ENCODE measurements at regions of chr2 and their contacts with region 1.

Region 1: GRCh38 chr2:241271641-241272297 is 43.7 kb downstream of the HDLBP start:
- DNase-seq: peak; percentile 92 to 94
- ATAC-seq: peak; percentile 91
- H3K4me3 ChIP-seq: peak overlapping the region; percentile 95 to 98
- H3K27ac ChIP-seq: peak overlapping the region; percentile 80 to 89
- H3K4me1 ChIP-seq: peaks cover 0 to 2% of the 10 kb centered on the region in 2 donors
- H3K27me3 ChIP-seq: no peaks in the 10 kb centered on the region

Region 2: GRCh38 chr2:241315093-241315878 is 43.5 kb after region 1 on chr2 and contains the start of gene HDLBP:
- intact Hi-C with region 1: loop called (anchors 1 to 5 kb)
- DNase-seq: peak; percentile 100
- ATAC-seq: peak; percentile 97
- H3K4me3 ChIP-seq: peak within 1 kb of the TSS; percentile 65 to 81
- H3K27ac ChIP-seq: peak within 1 kb of the TSS; percentile 88 to 98
- H3K4me1 ChIP-seq: peaks cover 0 to 5% of the 10 kb centered on the region in 2 donors
- H3K27me3 ChIP-seq: no peaks in the 10 kb centered on the region
- total RNA-seq, gene HDLBP: 415 to 476 TPM

Region 3: GRCh38 chr2:241354668-241355658 is 83.2 kb after region 1 on chr2:
- intact Hi-C with region 1: no loop called
- DNase-seq: peak; percentile 89 to 93
- ATAC-seq: peak; percentile 59
- H3K4me3 ChIP-seq: no peak overlapping the region
- H3K27ac ChIP-seq: peak overlapping the region in 1 of 2 donors; percentile 42
- H3K4me1 ChIP-seq: peaks cover 0 to 6% of the 10 kb centered on the region in 2 donors
- H3K27me3 ChIP-seq: no peaks in the 10 kb centered on the region

Region 4: GRCh38 chr2:241379481-241380480 is 108.0 kb after region 1 on chr2:
- intact Hi-C with region 1: loop called in 1 of 2 experiments (anchors 10 kb)
- DNase-seq: no peak
- ATAC-seq: peak; percentile 62
- H3K4me3 ChIP-seq: no peak overlapping the region
- H3K27ac ChIP-seq: peak overlapping the region; percentile 83 to 94
- H3K4me1 ChIP-seq: peaks cover 6 to 21% of the 10 kb centered on the region in 2 donors
- H3K27me3 ChIP-seq: no peaks in the 10 kb centered on the region

Region 5: DNA sequence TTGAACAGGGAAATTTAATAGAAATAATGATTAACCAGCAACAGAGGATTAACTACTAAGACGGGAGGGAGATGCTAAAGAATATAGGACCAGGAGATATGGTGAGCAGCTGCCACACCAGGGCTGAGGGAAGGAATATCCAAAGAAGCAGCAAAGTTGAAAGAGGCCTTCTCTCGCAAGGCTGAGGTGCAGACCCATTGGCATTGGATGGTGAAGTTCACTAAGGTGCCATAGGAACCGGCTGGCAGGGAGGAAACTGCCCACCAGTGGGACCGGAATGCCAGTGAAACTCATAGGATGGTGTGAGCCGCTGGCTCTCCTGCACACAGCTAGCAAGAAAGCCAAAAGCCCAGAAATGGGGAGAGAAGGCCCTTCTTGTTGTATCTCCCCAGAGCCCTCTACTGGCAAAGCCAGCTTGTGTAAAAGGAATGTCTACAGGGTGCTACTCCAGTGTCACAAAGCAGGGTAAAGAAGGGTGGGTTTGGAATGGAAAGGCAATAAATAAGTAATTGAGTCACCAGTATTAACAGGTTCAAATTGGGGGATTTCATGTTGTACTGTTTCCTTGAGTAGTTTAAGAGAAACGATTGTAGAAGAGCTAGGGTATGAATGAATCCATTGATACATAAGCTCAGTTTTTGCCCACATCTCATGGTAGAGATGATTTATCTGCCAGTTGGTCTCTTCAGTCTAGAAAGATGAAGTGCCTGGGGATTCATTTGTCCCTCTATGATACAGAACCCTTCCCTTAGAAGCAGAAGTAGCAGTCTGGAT is 120.3 kb after region 1 on chr2:
- intact Hi-C with region 1: loop called (anchors 10 kb)
- DNase-seq: no peak
- ATAC-seq: no peak
- H3K4me3 ChIP-seq: no peak overlapping the region
- H3K27ac ChIP-seq: no peak overlapping the region
- H3K4me1 ChIP-seq: no peaks in the 10 kb centered on the region
- H3K27me3 ChIP-seq: no peaks in the 10 kb centered on the region